Psoas muscle (tissue), 8 donors: ENCODE measurements at regions of chr4 and their contacts with region 1.

Region 1: DNA sequence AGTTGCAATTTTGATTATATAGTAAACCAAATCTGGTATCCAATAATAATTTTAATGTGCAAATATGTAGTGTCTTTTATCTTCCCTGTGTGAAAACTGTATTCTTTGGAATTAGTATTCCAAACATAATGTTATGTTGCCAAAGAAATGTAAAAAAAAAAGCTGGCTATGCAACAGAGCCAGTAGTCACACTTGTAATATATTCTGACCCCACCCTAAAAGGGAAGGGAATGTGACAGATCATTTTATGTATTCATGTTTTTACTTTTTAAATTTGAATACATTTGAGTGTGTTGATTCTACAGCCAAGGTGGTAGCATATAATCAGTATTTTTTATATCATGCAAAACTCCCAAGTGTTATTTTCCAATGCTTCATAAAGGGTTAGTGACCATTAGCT is 27.9 kb upstream of the MCUB start:
- DNase-seq: no peak
- ATAC-seq: no peak
- H3K4me3 ChIP-seq: no peak overlapping the region
- H3K27ac ChIP-seq: no peak overlapping the region
- H3K4me1 ChIP-seq: no peaks in the 10 kb centered on the region
- H3K27me3 ChIP-seq: no peaks in the 10 kb centered on the region
- CTCF ChIP-seq: no peak

Region 2: GRCh38 chr4:109826719-109827118 is 294.5 kb after region 1 on chr4:
- intact Hi-C with region 1: loop called in 1 of 2 experiments (anchors 10 kb)
- DNase-seq: no peak
- ATAC-seq: peak in 1 of 4 donors; percentile 56
- H3K4me3 ChIP-seq: no peak overlapping the region
- H3K27ac ChIP-seq: no peak overlapping the region
- H3K4me1 ChIP-seq: no peaks in the 10 kb centered on the region
- H3K27me3 ChIP-seq: no peaks in the 10 kb centered on the region
- CTCF ChIP-seq: peak; percentile 53